Activated naive CD4-positive, alpha-beta T cell treated with anti-CD3 and anti-CD28 coated beads for 36 hours (primary cell): ENCODE measurements at regions of chr4 and their contacts with region 1.

Region 1: GRCh38 chr4:705278-706082 is at the start of gene PCGF3:
- DNase-seq: peak; percentile 96
- H3K4me3 Mint-ChIP-seq: peak within 1 kb of the TSS; percentile 76
- H3K27ac Mint-ChIP-seq: no peak within 1 kb of the TSS
- H3K4me1 Mint-ChIP-seq: peaks cover 13% of the 10 kb centered on the region
- H3K27me3 Mint-ChIP-seq: no peaks in the 10 kb centered on the region
- total RNA-seq, gene PCGF3: 24.7 to 25.9 TPM

Region 2: GRCh38 chr4:931960-932712 is 226.7 kb after region 1 on chr4 and contains the starts of genes GAK and TMEM175:
- CTCF ChIA-PET with region 1: no interaction called
- intact Hi-C with region 1: loop called (anchors 1 kb)
- DNase-seq: peak; percentile 96
- H3K4me3 Mint-ChIP-seq: peak within 1 kb of the TSS; percentile 94
- H3K27ac Mint-ChIP-seq: peak within 1 kb of the TSS; percentile 90
- H3K4me1 Mint-ChIP-seq: peaks cover 45% of the 10 kb centered on the region
- H3K27me3 Mint-ChIP-seq: no peaks in the 10 kb centered on the region
- total RNA-seq, gene GAK: 87.6 to 96.8 TPM
- total RNA-seq, gene TMEM175: 13.9 to 15.8 TPM

Region 3: GRCh38 chr4:973431-974397 is 268.2 kb after region 1 on chr4 and contains the start of gene DGKQ:
- CTCF ChIA-PET with region 1: no interaction called
- intact Hi-C with region 1: loop called (anchors 1 kb)
- DNase-seq: peak; percentile 81
- H3K4me3 Mint-ChIP-seq: peak within 1 kb of the TSS; percentile 59
- H3K27ac Mint-ChIP-seq: no peak within 1 kb of the TSS
- H3K4me1 Mint-ChIP-seq: peaks cover 5% of the 10 kb centered on the region
- H3K27me3 Mint-ChIP-seq: no peaks in the 10 kb centered on the region
- total RNA-seq, gene DGKQ: 10.8 to 11.1 TPM